ENCODE measurements at regions of chr2 and their contacts with region 1.

Region 1: DNA sequence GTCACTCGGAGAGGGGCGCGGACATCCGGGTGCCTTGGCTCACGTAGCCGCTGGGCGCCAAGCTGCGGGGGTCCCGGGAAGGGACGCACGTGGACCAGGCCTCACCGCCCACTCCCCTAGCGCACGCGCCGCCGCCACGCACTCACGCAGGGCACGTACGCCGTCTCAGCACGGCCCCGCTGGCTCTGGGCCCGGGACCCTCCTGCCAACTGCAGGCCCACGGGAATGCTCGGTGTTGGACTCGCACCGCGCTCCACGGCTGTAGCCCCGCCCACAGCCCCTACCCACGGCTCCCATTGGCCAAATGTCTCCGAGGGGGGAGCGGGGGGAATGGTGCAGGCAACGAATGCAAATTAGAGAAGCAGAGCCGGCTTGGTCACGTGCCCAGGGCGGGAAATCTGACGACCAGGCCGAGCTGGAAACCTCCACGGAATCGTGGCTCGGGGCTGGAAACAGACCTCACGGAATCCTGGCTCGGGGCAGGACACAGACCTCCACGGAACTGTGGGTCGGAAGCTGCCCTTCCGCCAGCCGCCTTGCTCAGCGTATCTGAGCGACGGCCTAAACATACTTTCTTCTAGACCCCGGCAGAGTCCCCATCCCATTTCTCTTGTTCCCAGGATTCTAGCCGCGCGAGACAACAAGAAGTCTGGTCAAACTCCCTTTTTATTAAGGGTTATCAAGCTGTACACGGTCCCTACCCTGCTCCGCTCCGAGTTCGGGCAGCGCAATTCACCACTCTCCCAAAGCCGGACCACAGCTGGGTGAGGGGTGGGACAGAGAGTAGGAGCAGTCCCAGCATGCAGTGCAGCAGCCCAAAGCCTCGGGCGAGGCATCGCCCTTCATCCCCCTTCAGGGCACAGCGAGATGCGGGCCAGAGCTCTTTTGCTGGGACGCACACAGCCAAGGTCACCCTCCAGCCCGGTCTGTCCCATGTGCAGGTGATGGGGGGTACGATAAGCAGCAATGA is at the start of gene ABCB6:
- DNase-seq: peak in 1 of 2 experiments; percentile 92
- H3K4me3 ChIP-seq: peak within 1 kb of the TSS; percentile 66 to 80 (median 75)
- H3K27ac ChIP-seq: peak within 1 kb of the TSS; percentile 76; the same call in 1 of the 2 replicates
- H3K4me1 ChIP-seq: peaks cover 0 to 12% (median 6%) of the 10 kb centered on the region in 4 experiments; a peak in 3 of 7 replicates
- H3K27me3 ChIP-seq: no peaks in the 10 kb centered on the region; a peak in 1 of 7 replicates
- CTCF ChIP-seq: peak in 1 of 3 experiments; percentile 2; a peak in 2 of 4 replicates
- EP300 ChIP-seq: no peak
- POLR2A ChIP-seq: peak in 1 of 2 experiments; percentile 93; a peak in 2 of 3 replicates
- RAD21 ChIP-seq: peak in 1 of 2 experiments; percentile 11; a peak in 1 of 4 replicates
- total RNA-seq, gene ABCB6: 44.9 and 49.9 TPM in 2 replicates

Region 2: DNA sequence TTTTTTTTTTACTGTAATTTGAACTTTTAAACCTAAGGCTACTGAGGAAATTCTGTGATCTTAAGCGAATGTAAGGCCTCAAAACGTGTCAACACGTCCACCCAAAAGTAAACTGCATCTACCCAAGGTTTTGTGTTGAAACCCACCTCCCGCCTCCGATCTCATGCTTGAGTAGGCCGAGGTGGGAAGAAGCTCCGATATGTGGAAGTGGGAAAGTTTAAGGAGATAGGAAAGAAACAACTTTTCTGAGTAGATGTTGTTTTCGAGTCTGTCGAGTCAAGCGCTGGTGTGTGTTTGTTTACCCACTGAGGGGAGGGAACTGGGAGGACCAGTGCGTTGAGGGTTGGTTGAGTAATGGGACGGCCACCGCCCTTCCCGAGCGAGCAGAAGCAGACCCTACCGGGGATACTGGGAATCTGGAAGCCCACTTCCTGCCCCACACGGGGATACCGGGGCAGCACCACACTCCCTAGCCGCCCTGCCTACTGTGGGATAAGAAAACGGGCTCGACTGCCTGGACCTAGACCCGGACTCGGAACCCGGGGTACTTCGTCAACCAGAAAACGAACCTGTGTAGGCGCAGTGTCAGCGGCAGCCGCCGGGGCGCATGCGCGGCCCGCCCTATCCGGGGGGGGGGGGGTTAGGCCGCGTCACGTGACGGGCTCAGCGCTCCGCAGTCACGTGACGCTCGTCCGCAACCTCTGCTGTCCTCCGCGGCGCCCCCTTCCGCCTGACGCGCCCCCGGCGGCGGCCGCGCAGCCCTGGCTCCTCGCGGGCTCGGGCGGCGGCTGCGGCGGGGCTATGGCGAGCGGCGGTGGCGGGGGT is 41.3 kb before region 1 on chr2 and contains the start of gene RETREG2:
- CTCF ChIA-PET with region 1: interaction called, 8 read pairs
- POLR2A ChIA-PET with region 1: interaction called, 21 read pairs
- DNase-seq: peak; percentile 61 to 88
- H3K4me3 ChIP-seq: peak within 1 kb of the TSS; percentile 78 to 96 (median 92)
- H3K27ac ChIP-seq: peak within 1 kb of the TSS; percentile 78
- H3K4me1 ChIP-seq: peaks cover 0 to 13% (median 6%) of the 10 kb centered on the region in 4 experiments; a peak in 6 of 7 replicates
- H3K27me3 ChIP-seq: no peaks in the 10 kb centered on the region
- CTCF ChIP-seq: peak; percentile 44 to 61 (median 53)
- EP300 ChIP-seq: peak in 1 of 2 experiments; percentile 81; a peak in 1 of 3 replicates
- POLR2A ChIP-seq: peak in 1 of 2 experiments; percentile 31; a peak in 1 of 3 replicates
- RAD21 ChIP-seq: peak in 1 of 2 experiments; percentile 36; a peak in 1 of 4 replicates
- total RNA-seq, gene RETREG2: 50.2 and 51.3 TPM in 2 replicates

Region 3: DNA sequence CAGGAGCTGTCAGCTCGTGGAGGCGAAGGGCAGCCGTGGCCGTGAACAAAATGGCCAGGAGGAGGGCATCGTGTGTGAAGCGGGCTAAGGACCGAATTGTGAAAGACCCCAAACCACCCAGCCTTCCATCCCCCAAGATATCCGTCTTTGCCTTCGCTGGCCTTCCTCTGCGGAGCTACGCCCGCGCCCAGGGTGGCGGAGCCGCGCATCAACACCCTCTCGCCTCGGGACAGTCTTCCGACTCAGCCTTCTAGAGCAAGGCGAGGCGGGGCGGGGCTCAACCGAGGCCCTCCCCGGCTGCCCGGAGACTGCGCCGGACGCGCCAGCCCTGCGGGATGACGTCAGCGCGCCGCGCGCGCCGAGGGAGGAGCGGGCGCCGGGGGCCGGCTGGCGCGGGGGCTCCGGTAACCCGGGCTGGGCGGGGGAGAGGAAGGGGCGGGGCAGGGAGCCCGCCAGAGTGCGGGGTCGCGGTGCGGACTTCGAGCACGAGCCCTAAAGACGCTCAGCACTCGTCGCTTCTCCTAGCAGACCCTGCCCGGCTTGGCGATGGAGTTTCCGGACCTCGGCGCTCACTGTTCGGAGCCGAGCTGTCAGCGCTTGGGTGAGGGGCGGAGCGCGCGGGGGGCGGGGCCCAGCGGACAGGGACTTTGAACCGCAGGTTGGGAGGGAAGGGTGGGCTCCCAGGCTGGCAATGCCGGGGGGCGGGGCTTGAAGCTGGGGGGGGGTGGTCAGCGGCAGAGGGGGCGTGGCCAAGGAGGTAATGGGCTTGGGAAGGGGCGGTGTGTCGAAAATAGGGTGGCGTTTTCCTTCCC is 12.4 kb before region 1 on chr2 and contains the start of gene ZFAND2B:
- CTCF ChIA-PET with region 1: interaction called, 6 read pairs
- POLR2A ChIA-PET with region 1: interaction called, 101 read pairs
- DNase-seq: peak; percentile 78 to 96
- H3K4me3 ChIP-seq: peak within 1 kb of the TSS; percentile 70 to 80 (median 73)
- H3K27ac ChIP-seq: peak within 1 kb of the TSS; percentile 28
- H3K4me1 ChIP-seq: peaks cover 0 to 6% (median 3%) of the 10 kb centered on the region in 4 experiments; a peak in 5 of 7 replicates
- H3K27me3 ChIP-seq: no peaks in the 10 kb centered on the region
- CTCF ChIP-seq: no peak; a peak in 1 of 4 replicates
- EP300 ChIP-seq: no peak
- POLR2A ChIP-seq: peak in 1 of 2 experiments; percentile 81; a peak in 2 of 3 replicates
- RAD21 ChIP-seq: peak in 1 of 2 experiments; percentile 15; a peak in 1 of 4 replicates
- total RNA-seq, gene ZFAND2B: 16.0 and 16.6 TPM in 2 replicates

Region 4: DNA sequence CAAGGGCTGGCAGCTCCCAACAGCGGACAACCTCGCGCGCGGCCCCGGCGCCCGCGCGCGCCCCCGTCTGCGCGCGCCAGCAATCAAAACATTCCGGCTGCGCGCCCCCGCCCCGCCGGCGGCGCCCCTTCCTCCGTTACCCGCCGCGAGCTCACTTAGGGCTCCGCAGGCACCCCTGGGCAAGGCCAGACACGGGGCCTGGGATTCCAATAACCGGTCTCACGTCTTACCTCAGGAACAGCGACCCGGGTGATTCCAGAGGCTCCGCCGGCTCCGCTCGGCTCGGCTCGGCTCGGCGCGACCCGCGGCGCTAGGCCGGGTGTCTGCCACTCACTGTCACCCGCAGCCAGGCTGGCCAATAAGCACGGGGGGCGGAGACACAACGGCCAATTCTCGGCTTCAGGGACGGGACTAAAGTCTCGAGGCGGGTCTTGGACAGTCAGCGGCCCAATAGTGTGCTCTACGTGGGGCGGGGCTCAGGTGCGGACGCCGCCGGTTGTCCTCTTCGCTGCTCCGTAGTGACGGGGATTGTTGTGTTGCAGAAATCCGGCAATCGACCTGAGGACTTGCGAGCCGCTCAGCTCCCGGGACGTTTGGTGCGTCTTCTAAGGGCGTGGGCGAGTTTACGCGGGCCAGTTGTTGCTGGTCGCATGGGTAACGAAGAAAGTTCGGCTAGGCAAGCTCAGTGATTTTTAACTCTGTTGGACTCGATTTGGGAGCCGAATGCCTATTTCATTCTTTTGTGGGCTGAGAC is 10.5 kb after region 1 on chr2 and contains the starts of genes ANKZF1 and ATG9A:
- CTCF ChIA-PET with region 1: interaction called, 3 read pairs
- POLR2A ChIA-PET with region 1: interaction called, 57 read pairs
- DNase-seq: peak; percentile 93 to 95
- H3K4me3 ChIP-seq: peak within 1 kb of the TSS; percentile 82 to 97 (median 92)
- H3K27ac ChIP-seq: peak within 1 kb of the TSS; percentile 71
- H3K4me1 ChIP-seq: peaks cover 0 to 6% (median 3%) of the 10 kb centered on the region in 4 experiments; a peak in 5 of 7 replicates
- H3K27me3 ChIP-seq: no peaks in the 10 kb centered on the region; a peak in 1 of 7 replicates
- CTCF ChIP-seq: no peak
- EP300 ChIP-seq: 0 out of 3 replicates have a peak, but pooled peaks of 1 of the 2 experiments have one; percentile 13
- POLR2A ChIP-seq: peak; percentile 79 to 90
- RAD21 ChIP-seq: peak in 1 of 2 experiments; percentile 6; a peak in 1 of 4 replicates
- total RNA-seq, gene ANKZF1: 44.4 and 50.1 TPM in 2 replicates
- total RNA-seq, gene ATG9A: 43.6 and 43.8 TPM in 2 replicates

Region 5: DNA sequence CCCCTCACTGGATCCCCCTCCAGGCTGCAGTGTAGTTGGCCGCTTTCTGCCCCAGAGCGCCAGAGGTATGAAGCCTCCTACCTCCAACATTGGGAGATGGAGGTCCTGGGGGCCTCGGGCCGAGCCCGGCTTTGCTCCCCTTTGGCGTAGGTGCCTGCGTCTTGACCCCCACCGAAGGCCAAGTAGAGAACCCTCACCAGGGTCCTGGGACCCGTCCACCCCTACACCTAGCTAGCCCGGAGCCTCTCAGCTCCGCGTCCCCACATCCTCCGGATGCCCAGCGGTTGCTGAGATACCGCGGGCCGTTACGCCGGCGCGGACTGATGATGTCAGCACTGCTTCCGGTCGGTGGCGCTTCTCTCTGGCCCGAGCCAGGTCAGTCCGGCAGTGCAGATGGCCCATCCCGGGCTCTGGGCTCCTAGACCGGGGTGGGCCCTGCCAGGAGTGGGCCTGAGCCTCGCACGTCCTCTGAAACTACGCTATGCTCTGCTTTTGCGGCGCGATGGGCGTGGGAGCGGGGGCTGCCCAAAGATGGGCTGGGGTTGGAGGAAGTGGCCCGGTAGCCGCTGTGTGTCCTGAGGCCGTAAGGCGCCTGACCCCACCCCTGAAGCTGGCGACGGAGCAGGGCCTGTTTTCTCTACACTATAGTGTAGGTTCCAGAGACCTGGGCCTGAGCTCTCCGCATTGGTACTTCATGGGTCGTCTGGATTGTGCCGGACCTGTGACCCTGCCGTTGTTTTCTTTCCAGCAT is 26.3 kb after region 1 on chr2 and contains the starts of genes GLB1L and STK16:
- CTCF ChIA-PET with region 1: interaction called, 4 read pairs
- POLR2A ChIA-PET with region 1: interaction called, 190 read pairs
- DNase-seq: peak in 1 of 2 experiments; percentile 98
- H3K4me3 ChIP-seq: peak within 1 kb of the TSS; percentile 74 to 81 (median 80)
- H3K27ac ChIP-seq: peak within 1 kb of the TSS; percentile 91
- H3K4me1 ChIP-seq: peaks cover 0 to 5% (median 3%) of the 10 kb centered on the region in 4 experiments; a peak in 3 of 7 replicates
- H3K27me3 ChIP-seq: no peaks in the 10 kb centered on the region
- CTCF ChIP-seq: no peak
- EP300 ChIP-seq: no peak
- POLR2A ChIP-seq: peak in 1 of 2 experiments; percentile 91; a peak in 2 of 3 replicates
- RAD21 ChIP-seq: no peak
- total RNA-seq, gene GLB1L: 3.2 and 3.7 TPM in 2 replicates
- total RNA-seq, gene STK16: 17.0 and 21.3 TPM in 2 replicates